ENCODE measurements at regions of chr4 and their contacts with region 1.

Region 1: GRCh38 chr4:47933840-47934239 is 19.5 kb upstream of the NFXL1 start:
- DNase-seq: peak in 3 of 14 experiments; percentile 55 to 72 (median 68)
- ATAC-seq: peak; percentile 80
- H3K4me3 ChIP-seq: no peak overlapping the region
- H3K4me3 Mint-ChIP-seq: no peak overlapping the region
- H3K27ac ChIP-seq: no peak overlapping the region
- H3K27ac Mint-ChIP-seq: no peak overlapping the region
- H3K4me1 ChIP-seq: no peaks in the 10 kb centered on the region
- H3K4me1 Mint-ChIP-seq: peaks cover 5% of the 10 kb centered on the region
- H3K27me3 ChIP-seq: no peaks in the 10 kb centered on the region
- H3K27me3 Mint-ChIP-seq: no peaks in the 10 kb centered on the region
- CTCF ChIP-seq: peak; percentile 85

Region 2: DNA sequence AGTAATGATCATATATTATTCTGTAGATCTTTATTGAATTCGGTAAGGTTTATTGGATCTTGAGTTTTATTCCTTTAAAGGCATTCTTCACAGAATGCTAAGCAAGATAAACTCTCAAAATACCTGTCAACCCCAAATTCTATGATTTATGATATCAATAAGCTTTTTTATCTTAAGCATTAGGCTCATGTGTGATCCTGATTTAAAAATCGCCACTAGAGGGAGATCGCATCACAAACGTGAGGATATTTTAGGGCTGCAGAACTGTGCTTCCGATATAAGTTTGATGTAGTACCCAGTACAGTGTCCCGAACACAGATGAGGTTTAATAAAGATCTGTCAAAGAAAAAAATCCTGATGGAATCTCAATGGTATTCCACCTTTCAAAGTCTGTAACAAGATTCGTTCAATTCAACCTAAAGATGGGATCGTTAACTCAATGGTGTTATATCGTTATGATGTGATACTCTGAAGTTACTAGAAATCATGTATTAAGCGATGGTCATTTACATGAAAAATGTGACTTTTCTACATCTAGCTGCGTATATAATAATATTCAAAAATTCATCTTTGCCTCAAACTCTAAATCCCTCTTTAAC is 264.9 kb before region 1 on chr4:
- CTCF ChIA-PET with region 1: interaction called, 7 read pairs
- POLR2A ChIA-PET with region 1: no interaction called
- intact Hi-C with region 1: loop called (anchors 1 to 2 kb)
- DNase-seq: peak in 4 of 14 experiments; percentile 19 to 67 (median 53)
- ATAC-seq: peak; percentile 32
- H3K4me3 ChIP-seq: no peak overlapping the region
- H3K4me3 Mint-ChIP-seq: no peak overlapping the region
- H3K27ac ChIP-seq: no peak overlapping the region
- H3K27ac Mint-ChIP-seq: no peak overlapping the region
- H3K4me1 ChIP-seq: no peaks in the 10 kb centered on the region
- H3K4me1 Mint-ChIP-seq: no peaks in the 10 kb centered on the region
- H3K27me3 ChIP-seq: peaks cover 4 to 5% of the 10 kb centered on the region in 2 experiments
- H3K27me3 Mint-ChIP-seq: peaks cover 26% of the 10 kb centered on the region
- CTCF ChIP-seq: peak; percentile 75

Region 3: DNA sequence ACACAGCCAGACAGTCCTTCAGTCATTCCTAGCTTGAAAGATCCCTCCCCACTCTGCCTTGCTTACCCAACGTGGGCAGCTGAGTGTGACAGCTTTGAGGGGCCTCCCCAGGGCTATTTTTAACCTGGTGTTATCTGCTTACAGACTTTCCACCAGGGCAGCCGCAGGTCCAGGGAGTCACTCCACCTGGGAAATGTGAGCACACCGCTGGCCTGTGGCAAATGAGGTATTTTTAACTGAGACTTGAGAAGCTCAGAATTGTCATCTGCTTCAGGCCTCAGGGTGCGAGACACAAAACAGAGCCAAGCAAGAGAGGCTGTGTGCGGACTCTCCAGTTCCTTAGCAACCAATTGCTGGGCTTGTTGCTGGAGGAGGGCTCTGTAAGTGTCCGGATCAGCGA is 109.0 kb before region 1 on chr4:
- CTCF ChIA-PET with region 1: no interaction called
- POLR2A ChIA-PET with region 1: no interaction called
- intact Hi-C with region 1: no loop called
- DNase-seq: no peak
- ATAC-seq: no peak
- H3K4me3 ChIP-seq: no peak overlapping the region
- H3K4me3 Mint-ChIP-seq: no peak overlapping the region
- H3K27ac ChIP-seq: no peak overlapping the region
- H3K27ac Mint-ChIP-seq: no peak overlapping the region
- H3K4me1 ChIP-seq: peaks cover 8% of the 10 kb centered on the region
- H3K4me1 Mint-ChIP-seq: peaks cover 18% of the 10 kb centered on the region
- H3K27me3 ChIP-seq: no peaks in the 10 kb centered on the region
- H3K27me3 Mint-ChIP-seq: peaks cover 5% of the 10 kb centered on the region
- CTCF ChIP-seq: no peak

Region 4: GRCh38 chr4:47907089-47907646 is 26.7 kb before region 1 on chr4:
- CTCF ChIA-PET with region 1: no interaction called
- POLR2A ChIA-PET with region 1: no interaction called
- intact Hi-C with region 1: no loop called
- DNase-seq: no peak
- ATAC-seq: no peak
- H3K4me3 ChIP-seq: no peak overlapping the region
- H3K4me3 Mint-ChIP-seq: no peak overlapping the region
- H3K27ac ChIP-seq: no peak overlapping the region
- H3K27ac Mint-ChIP-seq: no peak overlapping the region
- H3K4me1 ChIP-seq: no peaks in the 10 kb centered on the region
- H3K4me1 Mint-ChIP-seq: peaks cover 41% of the 10 kb centered on the region
- H3K27me3 ChIP-seq: no peaks in the 10 kb centered on the region
- H3K27me3 Mint-ChIP-seq: no peaks in the 10 kb centered on the region
- CTCF ChIP-seq: no peak

Region 5: DNA sequence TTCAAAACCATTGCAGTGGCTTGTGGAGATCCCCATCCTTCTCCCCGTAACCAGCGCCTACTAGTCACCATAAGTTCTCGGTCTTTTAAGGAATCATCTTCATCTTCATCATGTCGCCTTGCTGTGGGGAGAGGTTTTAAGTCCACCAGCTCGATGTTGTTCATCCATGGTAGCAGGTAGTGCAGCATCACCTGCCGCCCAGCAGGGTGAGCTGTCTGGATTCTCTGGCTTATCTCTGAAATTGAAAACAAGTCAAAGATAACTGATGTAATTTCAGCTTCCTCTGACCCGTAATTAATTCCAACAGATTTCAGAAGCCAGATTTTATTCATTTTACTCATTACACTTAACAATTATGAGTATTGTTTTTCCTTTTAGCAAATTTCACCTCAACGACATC is 623.6 kb after region 1 on chr4:
- CTCF ChIA-PET with region 1: no interaction called
- POLR2A ChIA-PET with region 1: no interaction called
- intact Hi-C with region 1: no loop called
- DNase-seq: no peak
- ATAC-seq: no peak
- H3K4me3 ChIP-seq: no peak overlapping the region
- H3K4me3 Mint-ChIP-seq: no peak overlapping the region
- H3K27ac ChIP-seq: no peak overlapping the region
- H3K27ac Mint-ChIP-seq: no peak overlapping the region
- H3K4me1 ChIP-seq: no peaks in the 10 kb centered on the region
- H3K4me1 Mint-ChIP-seq: no peaks in the 10 kb centered on the region
- H3K27me3 ChIP-seq: no peaks in the 10 kb centered on the region
- H3K27me3 Mint-ChIP-seq: no peaks in the 10 kb centered on the region
- CTCF ChIP-seq: no peak